Activated T-helper 1 cell treated with anti-CD3 and anti-CD28 coated beads, Interleukin-12 subunit alpha, Interleukin-12 subunit beta, Interleukin-2, Interleukin-4 antibody, amounts not matched to agents 30 ng/mL and 10 ng/mL and 1 ng/mL, durations not matched to agents 14 hours and 24 hours and 36 hours (primary cell): ENCODE measurements at regions of chr5 and their contacts with region 1.

Region 1: GRCh38 chr5:173887610-173888472 is at the start of gene CPEB4:
- DNase-seq: peak; percentile 96
- H3K4me3 Mint-ChIP-seq: peak within 1 kb of the TSS; percentile 91
- H3K27ac Mint-ChIP-seq: peak within 1 kb of the TSS; percentile 98
- H3K4me1 Mint-ChIP-seq: peaks cover 79% of the 10 kb centered on the region
- H3K27me3 Mint-ChIP-seq: no peaks in the 10 kb centered on the region
- total RNA-seq, gene CPEB4: 9.1 and 14.1 TPM in 2 replicates

Region 2: GRCh38 chr5:172770675-172771438 is 1117.0 kb before region 1 on chr5 and contains the start of gene DUSP1:
- intact Hi-C with region 1: loop called (anchors 10 kb)
- DNase-seq: peak; percentile 93
- H3K4me3 Mint-ChIP-seq: peak within 1 kb of the TSS; percentile 88
- H3K27ac Mint-ChIP-seq: peak within 1 kb of the TSS; percentile 98
- H3K4me1 Mint-ChIP-seq: peaks cover 61% of the 10 kb centered on the region
- H3K27me3 Mint-ChIP-seq: no peaks in the 10 kb centered on the region
- total RNA-seq, gene DUSP1: 11.9 and 12.5 TPM in 2 replicates

Region 3: GRCh38 chr5:173781814-173782670 is 105.8 kb before region 1 on chr5:
- intact Hi-C with region 1: loop called (anchors 5 kb)
- DNase-seq: peak; percentile 40
- H3K4me3 Mint-ChIP-seq: no peak overlapping the region
- H3K27ac Mint-ChIP-seq: peak overlapping the region; percentile 74
- H3K4me1 Mint-ChIP-seq: peaks cover 26% of the 10 kb centered on the region
- H3K27me3 Mint-ChIP-seq: no peaks in the 10 kb centered on the region

Region 4: GRCh38 chr5:173823711-173824528 is 63.9 kb before region 1 on chr5:
- intact Hi-C with region 1: loop called (anchors 2 kb)
- DNase-seq: no peak
- H3K4me3 Mint-ChIP-seq: no peak overlapping the region
- H3K27ac Mint-ChIP-seq: no peak overlapping the region
- H3K4me1 Mint-ChIP-seq: peaks cover 27% of the 10 kb centered on the region
- H3K27me3 Mint-ChIP-seq: peaks cover 2% of the 10 kb centered on the region

Region 5: DNA sequence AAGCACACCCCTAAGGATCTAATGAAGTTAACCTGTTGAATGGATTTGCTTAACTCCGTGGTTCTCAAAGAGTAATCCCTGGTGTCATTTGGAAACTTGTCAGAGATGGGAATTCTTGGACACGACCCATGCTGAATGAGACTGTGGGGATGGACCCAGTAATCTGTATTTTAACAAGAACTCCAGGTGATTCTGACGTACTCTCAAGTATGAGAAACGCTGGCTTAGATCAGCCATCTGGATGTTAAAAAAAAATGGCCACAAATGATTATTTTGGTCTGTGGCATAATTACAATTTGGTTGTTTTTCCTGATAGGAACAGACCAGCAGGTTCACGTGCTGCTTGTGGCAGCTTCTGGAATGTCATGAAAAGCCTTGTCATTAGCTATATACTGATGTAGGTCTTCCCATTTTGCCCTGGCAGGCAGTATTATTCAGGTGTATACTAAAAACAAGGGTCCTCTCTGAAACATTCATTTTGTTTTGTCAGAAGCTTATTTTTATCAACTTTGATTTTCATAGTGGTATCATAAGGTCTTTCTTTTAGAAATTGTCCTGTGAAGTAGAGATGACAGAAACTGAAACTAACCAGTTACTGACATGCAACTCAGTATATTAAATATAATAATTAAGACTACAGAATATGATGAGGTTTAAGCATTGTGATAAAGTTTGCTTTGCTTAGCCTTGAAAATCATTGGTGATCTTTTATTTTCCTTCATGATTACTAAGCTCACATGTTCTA is 15.7 kb after region 1 on chr5:
- intact Hi-C with region 1: loop called (anchors 1 kb)
- DNase-seq: no peak
- H3K4me3 Mint-ChIP-seq: no peak overlapping the region
- H3K27ac Mint-ChIP-seq: no peak overlapping the region
- H3K4me1 Mint-ChIP-seq: peaks cover 13% of the 10 kb centered on the region
- H3K27me3 Mint-ChIP-seq: peaks cover 3% of the 10 kb centered on the region

Region 6: GRCh38 chr5:173917788-173918786 is 30.2 kb after region 1 on chr5:
- intact Hi-C with region 1: loop called (anchors 1 kb)
- DNase-seq: peak; percentile 44
- H3K4me3 Mint-ChIP-seq: no peak overlapping the region
- H3K27ac Mint-ChIP-seq: no peak overlapping the region
- H3K4me1 Mint-ChIP-seq: no peaks in the 10 kb centered on the region
- H3K27me3 Mint-ChIP-seq: no peaks in the 10 kb centered on the region

Region 7: GRCh38 chr5:173972925-173973615 is 85.2 kb after region 1 on chr5:
- intact Hi-C with region 1: loop called (anchors 1 kb)
- DNase-seq: peak; percentile 53
- H3K4me3 Mint-ChIP-seq: peak overlapping the region; percentile 81
- H3K27ac Mint-ChIP-seq: peak overlapping the region; percentile 18
- H3K4me1 Mint-ChIP-seq: peaks cover 12% of the 10 kb centered on the region
- H3K27me3 Mint-ChIP-seq: peaks cover 32% of the 10 kb centered on the region

Region 8: DNA sequence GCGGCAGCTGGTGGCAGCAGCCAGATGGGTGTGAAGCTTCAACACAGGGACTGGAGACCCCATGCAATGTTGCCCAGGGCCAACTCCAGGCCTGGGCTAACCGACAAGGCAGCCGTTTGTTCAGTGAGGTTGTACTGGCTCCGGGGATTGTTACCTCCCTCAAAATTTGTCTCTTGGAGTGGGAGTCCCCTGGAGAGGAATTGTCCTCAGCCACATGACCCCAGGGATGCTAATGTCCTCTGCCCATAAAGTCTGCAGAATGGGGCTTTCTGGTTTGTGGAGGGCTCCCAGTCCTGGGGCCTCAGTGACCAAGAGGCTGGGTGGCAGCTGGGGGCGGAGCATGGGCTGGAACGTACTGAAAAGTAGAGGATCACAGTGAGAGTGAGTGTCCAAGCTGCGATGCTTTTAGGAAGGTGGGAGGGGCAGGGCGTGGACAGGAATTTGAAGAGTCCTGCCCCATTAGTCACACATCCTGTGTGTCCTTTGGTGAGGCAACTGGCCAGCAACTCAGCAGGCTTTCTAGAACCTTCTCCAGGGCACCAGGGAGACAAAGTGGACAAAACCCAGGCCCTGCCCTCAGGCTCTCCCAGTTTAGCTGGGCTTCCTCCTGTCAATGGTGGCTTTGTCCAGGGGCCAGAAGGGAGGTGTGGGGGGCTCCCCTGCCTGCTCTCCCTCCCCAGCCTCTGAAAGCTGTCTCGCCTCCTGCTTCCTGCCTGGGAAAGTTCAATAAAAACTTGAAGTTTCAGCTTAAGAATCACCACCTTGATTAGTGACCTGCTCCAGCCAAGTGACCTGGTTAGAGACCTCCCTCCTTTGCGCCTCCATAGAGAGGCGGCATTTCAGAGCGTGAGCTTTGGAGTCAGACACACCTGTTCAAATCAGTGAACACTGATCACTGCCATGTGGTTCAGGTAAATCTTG is 271.7 kb after region 1 on chr5:
- intact Hi-C with region 1: no loop called
- DNase-seq: no peak
- H3K4me3 Mint-ChIP-seq: no peak overlapping the region
- H3K27ac Mint-ChIP-seq: no peak overlapping the region
- H3K4me1 Mint-ChIP-seq: no peaks in the 10 kb centered on the region
- H3K27me3 Mint-ChIP-seq: no peaks in the 10 kb centered on the region